H1 (cell line): ENCODE measurements at regions of chr16 and their contacts with region 1.

Region 1: GRCh38 chr16:4350787-4351659 is at the start of gene PAM16:
- DNase-seq: peak; percentile 87 to 100
- H3K4me3 ChIP-seq: peak within 1 kb of the TSS; percentile 91 to 97 (median 96)
- H3K27ac ChIP-seq: peak within 1 kb of the TSS; percentile 85
- H3K4me1 ChIP-seq: peaks cover 0 to 4% (median 0%) of the 10 kb centered on the region in 4 experiments; a peak in 1 of 7 replicates
- H3K27me3 ChIP-seq: peaks cover 0 to 2% (median 0%) of the 10 kb centered on the region in 4 experiments; a peak in 1 of 7 replicates
- CTCF ChIP-seq: no peak
- EP300 ChIP-seq: no peak
- POLR2A ChIP-seq: peak in 1 of 2 experiments; percentile 76; a peak in 2 of 3 replicates
- RAD21 ChIP-seq: no peak
- total RNA-seq, gene PAM16: 78.3 and 84.4 TPM in 2 replicates

Region 2: GRCh38 chr16:4339909-4340308 is 11.1 kb before region 1 on chr16:
- CTCF ChIA-PET with region 1: interaction called, 10 read pairs
- POLR2A ChIA-PET with region 1: interaction called, 154 read pairs
- DNase-seq: no peak
- H3K4me3 ChIP-seq: no peak overlapping the region
- H3K27ac ChIP-seq: no peak overlapping the region
- H3K4me1 ChIP-seq: no peaks in the 10 kb centered on the region; a peak in 2 of 7 replicates
- H3K27me3 ChIP-seq: no peaks in the 10 kb centered on the region
- CTCF ChIP-seq: no peak
- EP300 ChIP-seq: no peak
- POLR2A ChIP-seq: no peak
- RAD21 ChIP-seq: no peak

Region 3: DNA sequence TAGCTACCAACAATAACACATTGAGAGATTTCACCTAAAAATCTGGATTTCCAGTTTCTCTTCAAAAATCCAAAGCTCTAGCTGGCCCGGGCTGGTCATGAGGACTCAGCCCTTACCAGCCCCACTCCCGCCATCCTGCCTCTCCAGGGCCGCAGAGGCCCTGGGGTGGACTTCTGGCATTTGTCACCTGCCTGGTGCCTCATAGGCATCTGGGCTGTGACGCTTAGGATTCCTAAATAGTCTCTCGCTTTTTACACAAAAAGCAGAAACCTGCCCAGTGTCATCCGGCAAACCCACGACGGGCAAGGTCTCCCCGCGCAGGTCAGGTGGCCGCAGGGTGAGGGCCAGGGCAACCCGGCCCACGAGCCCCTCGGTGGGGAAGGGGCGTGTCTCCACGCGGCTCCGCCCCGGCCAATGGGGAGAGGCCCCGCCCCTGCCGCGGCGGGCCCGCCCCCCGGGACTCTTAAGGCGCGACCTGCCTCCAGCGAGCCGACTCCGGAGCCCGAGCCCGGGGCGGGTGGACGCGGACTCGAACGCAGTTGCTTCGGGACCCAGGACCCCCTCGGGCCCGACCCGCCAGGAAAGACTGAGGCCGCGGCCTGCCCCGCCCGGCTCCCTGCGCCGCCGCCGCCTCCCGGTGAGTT is 20.5 kb after region 1 on chr16 and contains the start of gene VASN:
- CTCF ChIA-PET with region 1: interaction called, 7 read pairs
- POLR2A ChIA-PET with region 1: interaction called, 19 read pairs
- DNase-seq: peak in 1 of 2 experiments; percentile 93
- H3K4me3 ChIP-seq: peak within 1 kb of the TSS; percentile 54 to 78 (median 59)
- H3K27ac ChIP-seq: no peak within 1 kb of the TSS
- H3K4me1 ChIP-seq: peaks cover 4 to 40% (median 34%) of the 10 kb centered on the region in 4 experiments
- H3K27me3 ChIP-seq: peaks cover 0 to 3% (median under 1%) of the 10 kb centered on the region in 4 experiments; a peak in 2 of 7 replicates
- CTCF ChIP-seq: no peak
- EP300 ChIP-seq: no peak
- POLR2A ChIP-seq: peak in 1 of 2 experiments; percentile 97; a peak in 2 of 3 replicates
- RAD21 ChIP-seq: no peak
- total RNA-seq, gene VASN: 9.6 and 10.1 TPM in 2 replicates